Colonic mucosa (tissue), 4 donors: ENCODE measurements at regions of chr4 and their contacts with region 1.

Region 1: DNA sequence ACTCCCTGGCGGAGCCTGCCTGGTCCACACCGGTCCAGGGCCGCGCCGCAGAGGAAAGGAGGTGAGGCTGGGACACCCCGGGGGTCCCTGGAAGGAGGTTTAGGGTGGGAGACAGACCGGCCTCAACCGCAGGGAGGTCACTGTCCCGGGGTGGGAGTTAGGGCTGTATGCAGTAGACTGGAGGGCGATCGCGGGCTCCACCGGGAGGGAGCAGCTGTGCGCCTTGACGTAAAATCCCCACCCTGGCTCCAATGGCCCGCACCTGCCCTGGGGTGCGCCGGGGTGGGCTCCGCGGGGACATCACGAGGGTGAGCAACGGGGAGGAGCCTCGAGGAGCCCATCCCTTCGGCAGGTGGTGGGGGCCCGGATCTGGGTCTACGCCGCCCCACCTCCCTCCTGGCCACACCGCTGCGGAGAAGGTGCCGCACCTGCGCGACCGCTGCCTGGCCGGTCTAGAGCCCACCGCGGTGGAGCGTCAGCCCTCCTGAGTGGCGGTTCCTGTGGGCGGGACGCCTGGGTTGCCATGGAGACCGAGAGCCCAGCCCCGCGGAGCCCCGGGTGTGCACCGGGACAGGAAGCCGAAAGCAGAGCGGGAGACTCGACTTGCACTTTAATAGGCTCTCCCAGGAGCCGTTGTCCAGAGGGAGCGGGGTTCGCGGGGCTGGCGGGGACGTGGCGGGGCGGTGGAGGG is 105.1 kb downstream of the ADRA2C start:
- DNase-seq: no peak
- H3K4me3 ChIP-seq: no peak overlapping the region
- H3K27ac ChIP-seq: no peak overlapping the region
- H3K4me1 ChIP-seq: no peaks in the 10 kb centered on the region
- H3K27me3 ChIP-seq: peaks cover 23% of the 10 kb centered on the region
- CTCF ChIP-seq: no peak

Region 2: DNA sequence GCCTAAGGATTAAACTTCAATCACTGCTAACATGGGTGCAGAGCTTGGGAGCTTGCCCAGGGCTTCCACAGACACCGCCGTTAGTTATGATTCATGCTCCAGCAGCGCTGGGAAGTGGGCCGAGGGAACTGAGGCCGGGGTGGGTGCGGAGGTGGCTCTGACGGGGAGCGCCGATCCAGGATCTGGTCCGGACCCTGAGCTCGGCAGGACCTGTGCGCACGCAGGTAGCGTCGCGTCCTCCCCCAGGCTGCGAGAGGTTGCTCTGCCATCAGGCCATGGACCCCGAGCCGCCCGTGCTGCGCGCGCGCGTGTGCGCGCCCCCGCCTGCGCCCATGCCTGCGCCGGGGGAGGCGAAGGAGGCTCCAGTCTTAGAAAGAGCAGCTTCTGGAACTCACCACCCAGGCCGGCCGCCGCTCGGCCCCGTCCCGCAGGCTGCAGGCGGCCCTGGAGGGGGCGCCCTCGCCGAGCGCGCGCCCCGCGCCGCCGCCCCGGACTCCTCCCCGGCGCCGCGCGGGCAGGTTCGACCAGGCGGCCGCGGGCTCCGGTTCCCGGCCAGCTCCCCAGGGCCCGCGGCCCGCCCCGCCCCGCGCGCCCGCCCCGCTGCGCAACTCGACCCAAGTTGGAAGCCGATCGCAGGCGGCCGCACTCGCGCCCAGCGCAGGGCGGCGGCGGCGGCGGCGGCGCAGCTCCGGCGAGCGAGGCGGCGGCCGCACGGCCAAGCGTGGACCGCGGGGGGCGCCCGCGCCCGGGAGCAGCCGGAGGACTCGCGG is 105.9 kb before region 1 on chr4:
- intact Hi-C with region 1: loop called (anchors 10 kb)
- DNase-seq: peak; percentile 26
- H3K4me3 ChIP-seq: no peak overlapping the region
- H3K27ac ChIP-seq: no peak overlapping the region
- H3K4me1 ChIP-seq: no peaks in the 10 kb centered on the region
- H3K27me3 ChIP-seq: peaks cover 25% of the 10 kb centered on the region
- CTCF ChIP-seq: no peak